ENCODE measurements at regions of chr2 and their contacts with region 1.

Region 1: DNA sequence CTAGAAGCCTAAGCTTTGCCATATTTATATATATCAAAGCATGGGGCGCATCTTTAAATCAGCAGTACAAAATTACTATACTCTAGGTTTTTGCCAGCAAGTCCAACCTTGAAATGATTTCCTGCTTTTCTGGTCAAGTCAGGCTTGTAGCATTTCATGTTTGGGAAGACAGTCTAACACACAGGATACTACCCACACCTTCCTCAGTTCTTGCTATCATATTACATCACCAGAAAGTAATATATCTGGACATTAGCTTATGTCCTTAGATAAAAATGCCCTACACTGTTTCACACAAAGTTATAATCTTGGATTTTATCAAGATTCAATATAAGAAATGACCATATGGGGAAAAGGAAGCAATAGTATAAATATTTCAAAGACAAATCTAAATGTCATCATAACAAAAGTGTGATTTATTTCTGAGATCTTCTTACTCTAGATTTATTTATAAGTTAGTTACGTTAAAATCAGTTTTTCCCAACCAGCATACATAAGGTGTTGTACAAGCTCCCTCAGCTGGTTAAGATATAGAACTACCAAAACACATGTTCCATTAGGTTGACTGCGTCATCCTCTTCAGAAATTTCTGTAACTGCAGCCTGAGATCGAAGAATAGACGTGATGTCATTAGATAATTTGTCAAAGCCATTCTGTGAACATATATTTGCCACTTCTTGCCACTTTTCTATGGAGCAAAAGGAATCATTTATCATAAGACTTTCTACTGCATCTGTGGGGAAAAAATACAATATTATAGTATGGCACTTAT is 56.7 kb downstream of the CLHC1 start:
- DNase-seq: peak in 3 of 14 experiments; percentile 64 to 76 (median 71)
- ATAC-seq: peak; percentile 99
- H3K4me3 ChIP-seq: no peak overlapping the region
- H3K4me3 Mint-ChIP-seq: no peak overlapping the region
- H3K27ac ChIP-seq: no peak overlapping the region
- H3K27ac Mint-ChIP-seq: no peak overlapping the region
- H3K4me1 ChIP-seq: no peaks in the 10 kb centered on the region
- H3K4me1 Mint-ChIP-seq: peaks cover 10% of the 10 kb centered on the region
- H3K27me3 ChIP-seq: no peaks in the 10 kb centered on the region
- H3K27me3 Mint-ChIP-seq: no peaks in the 10 kb centered on the region
- CTCF ChIP-seq: peak; percentile 59

Region 2: GRCh38 chr2:54106631-54107454 is 1068.6 kb before region 1 on chr2:
- CTCF ChIA-PET with region 1: no interaction called
- POLR2A ChIA-PET with region 1: no interaction called
- intact Hi-C with region 1: loop called in 1 of 2 experiments (anchors 5 kb)
- DNase-seq: peak in 12 of 14 experiments; percentile 11 to 77 (median 30)
- ATAC-seq: peak; percentile 78
- H3K4me3 ChIP-seq: no peak overlapping the region
- H3K4me3 Mint-ChIP-seq: no peak overlapping the region
- H3K27ac ChIP-seq: no peak overlapping the region
- H3K27ac Mint-ChIP-seq: no peak overlapping the region
- H3K4me1 ChIP-seq: peaks cover 8% of the 10 kb centered on the region
- H3K4me1 Mint-ChIP-seq: peaks cover 11% of the 10 kb centered on the region
- H3K27me3 ChIP-seq: no peaks in the 10 kb centered on the region
- H3K27me3 Mint-ChIP-seq: no peaks in the 10 kb centered on the region
- CTCF ChIP-seq: peak; percentile 66

Region 3: DNA sequence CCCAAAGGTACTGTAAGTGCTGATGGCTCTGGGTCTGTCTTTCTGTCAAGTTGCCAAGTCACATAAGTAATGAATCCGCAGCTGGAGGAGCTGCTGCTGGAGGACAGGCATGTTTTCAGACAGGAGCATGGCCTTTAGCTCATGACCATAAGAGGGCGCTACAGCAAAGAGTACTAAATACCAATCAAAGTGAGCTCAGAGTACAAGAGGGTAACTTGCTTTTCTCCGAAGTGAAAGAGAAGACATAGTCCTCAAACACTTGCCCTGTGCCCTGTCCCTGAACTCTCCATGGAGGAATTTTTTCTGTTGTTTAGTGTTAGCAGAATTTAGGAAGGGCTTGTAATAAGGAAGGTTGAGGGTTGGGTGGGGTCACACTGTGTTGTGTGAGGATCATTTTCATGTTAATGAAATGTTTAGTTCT is 510.0 kb before region 1 on chr2:
- CTCF ChIA-PET with region 1: no interaction called
- POLR2A ChIA-PET with region 1: no interaction called
- intact Hi-C with region 1: loop called (anchors 1 to 10 kb)
- DNase-seq: peak in 9 of 14 experiments; percentile 10 to 71 (median 32)
- ATAC-seq: peak; percentile 77
- H3K4me3 ChIP-seq: no peak overlapping the region
- H3K4me3 Mint-ChIP-seq: no peak overlapping the region
- H3K27ac ChIP-seq: no peak overlapping the region
- H3K27ac Mint-ChIP-seq: peak overlapping the region; percentile 18
- H3K4me1 ChIP-seq: no peaks in the 10 kb centered on the region
- H3K4me1 Mint-ChIP-seq: peaks cover 5% of the 10 kb centered on the region
- H3K27me3 ChIP-seq: no peaks in the 10 kb centered on the region
- H3K27me3 Mint-ChIP-seq: no peaks in the 10 kb centered on the region
- CTCF ChIP-seq: peak; percentile 55

Region 4: DNA sequence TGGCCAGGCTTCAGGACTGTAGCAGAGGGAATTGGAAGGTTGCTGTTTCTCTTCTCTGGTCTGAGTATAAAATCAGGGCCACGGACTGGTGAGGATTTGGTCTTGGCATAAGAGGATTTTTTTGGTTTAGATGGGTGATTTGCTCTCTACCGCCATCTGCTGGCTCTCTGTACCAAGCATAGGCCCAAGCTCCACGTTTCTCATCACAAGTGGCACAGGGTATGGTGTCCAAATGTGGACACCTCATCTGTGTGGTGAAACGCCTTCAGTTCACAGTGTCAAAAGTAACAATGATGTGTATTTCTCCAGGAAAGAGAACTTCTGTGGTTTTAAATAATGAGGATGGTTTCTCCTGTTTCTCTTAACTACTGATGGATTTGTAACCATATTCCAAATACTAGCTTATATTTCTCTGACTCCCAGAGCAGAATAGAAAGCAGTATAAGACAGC is 336.8 kb before region 1 on chr2:
- CTCF ChIA-PET with region 1: interaction called, 7 read pairs
- POLR2A ChIA-PET with region 1: interaction called, 3 read pairs
- intact Hi-C with region 1: loop called (anchors 2 kb)
- DNase-seq: peak; percentile 37 to 82 (median 54)
- ATAC-seq: peak; percentile 73
- H3K4me3 ChIP-seq: no peak overlapping the region
- H3K4me3 Mint-ChIP-seq: no peak overlapping the region
- H3K27ac ChIP-seq: no peak overlapping the region
- H3K27ac Mint-ChIP-seq: no peak overlapping the region
- H3K4me1 ChIP-seq: no peaks in the 10 kb centered on the region
- H3K4me1 Mint-ChIP-seq: no peaks in the 10 kb centered on the region
- H3K27me3 ChIP-seq: no peaks in the 10 kb centered on the region
- H3K27me3 Mint-ChIP-seq: no peaks in the 10 kb centered on the region
- CTCF ChIP-seq: peak; percentile 92

Region 5: DNA sequence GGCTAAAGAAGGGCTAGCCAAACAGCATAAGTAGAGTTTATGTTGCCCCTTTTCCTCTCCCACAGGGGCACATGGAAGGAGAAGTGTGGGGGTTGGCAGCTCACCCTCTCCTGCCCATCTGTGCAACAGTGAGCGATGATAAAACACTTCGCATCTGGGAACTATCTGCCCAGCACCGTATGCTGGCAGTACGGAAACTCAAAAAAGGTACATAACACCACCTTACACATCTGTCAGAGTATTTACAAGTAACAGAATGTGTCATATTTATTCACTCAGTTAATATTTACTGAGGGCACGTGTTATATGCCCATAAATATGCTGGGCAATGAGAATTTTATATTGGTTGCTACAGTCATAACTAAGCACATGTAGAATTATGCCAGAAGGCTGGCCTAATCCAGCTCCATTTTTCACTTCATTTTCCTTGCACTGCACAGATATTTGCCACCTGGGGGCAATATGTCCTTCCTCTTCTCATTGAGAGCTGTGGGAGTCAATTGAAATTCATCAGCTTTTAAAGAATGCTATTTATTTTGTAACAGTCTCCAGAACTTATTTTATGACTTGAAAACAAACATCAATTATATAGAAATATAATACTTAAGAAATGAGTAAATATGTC is 275.8 kb before region 1 on chr2:
- CTCF ChIA-PET with region 1: interaction called, 3 read pairs
- POLR2A ChIA-PET with region 1: interaction called, 3 read pairs
- intact Hi-C with region 1: loop called in 1 of 2 experiments (anchors 2 kb)
- DNase-seq: peak in 3 of 14 experiments; percentile 41 to 47 (median 45)
- ATAC-seq: no peak
- H3K4me3 ChIP-seq: no peak overlapping the region
- H3K4me3 Mint-ChIP-seq: no peak overlapping the region
- H3K27ac ChIP-seq: no peak overlapping the region
- H3K27ac Mint-ChIP-seq: no peak overlapping the region
- H3K4me1 ChIP-seq: peaks cover 21% of the 10 kb centered on the region
- H3K4me1 Mint-ChIP-seq: peaks cover 27% of the 10 kb centered on the region
- H3K27me3 ChIP-seq: no peaks in the 10 kb centered on the region
- H3K27me3 Mint-ChIP-seq: no peaks in the 10 kb centered on the region
- CTCF ChIP-seq: peak; percentile 41

Region 6: GRCh38 chr2:55014962-55015939 is 160.2 kb before region 1 on chr2:
- CTCF ChIA-PET with region 1: interaction called, 13 read pairs
- POLR2A ChIA-PET with region 1: interaction called, 3 read pairs
- intact Hi-C with region 1: loop called in 1 of 2 experiments (anchors 1 kb)
- DNase-seq: peak in 13 of 14 experiments; percentile 4 to 74 (median 26)
- ATAC-seq: peak; percentile 23
- H3K4me3 ChIP-seq: no peak overlapping the region
- H3K4me3 Mint-ChIP-seq: no peak overlapping the region
- H3K27ac ChIP-seq: no peak overlapping the region
- H3K27ac Mint-ChIP-seq: no peak overlapping the region
- H3K4me1 ChIP-seq: peaks cover 4% of the 10 kb centered on the region
- H3K4me1 Mint-ChIP-seq: peaks cover 59% of the 10 kb centered on the region
- H3K27me3 ChIP-seq: no peaks in the 10 kb centered on the region
- H3K27me3 Mint-ChIP-seq: no peaks in the 10 kb centered on the region
- CTCF ChIP-seq: peak; percentile 82

Region 7: GRCh38 chr2:55159037-55159651 is 16.3 kb before region 1 on chr2:
- CTCF ChIA-PET with region 1: no interaction called
- POLR2A ChIA-PET with region 1: no interaction called
- intact Hi-C with region 1: no loop called
- DNase-seq: no peak
- ATAC-seq: no peak
- H3K4me3 ChIP-seq: no peak overlapping the region
- H3K4me3 Mint-ChIP-seq: no peak overlapping the region
- H3K27ac ChIP-seq: no peak overlapping the region
- H3K27ac Mint-ChIP-seq: no peak overlapping the region
- H3K4me1 ChIP-seq: peaks cover 4% of the 10 kb centered on the region
- H3K4me1 Mint-ChIP-seq: peaks cover 8% of the 10 kb centered on the region
- H3K27me3 ChIP-seq: no peaks in the 10 kb centered on the region
- H3K27me3 Mint-ChIP-seq: no peaks in the 10 kb centered on the region
- CTCF ChIP-seq: no peak